ENCODE measurements at regions of chr2 and their contacts with region 1.

Region 1: GRCh38 chr2:30208452-30208851 is 22.9 kb upstream of the LBH start:
- DNase-seq: peak; percentile 56
- H3K4me3 Mint-ChIP-seq: no peak overlapping the region
- H3K27ac Mint-ChIP-seq: no peak overlapping the region
- H3K4me1 Mint-ChIP-seq: peaks cover 13% of the 10 kb centered on the region
- H3K27me3 Mint-ChIP-seq: no peaks in the 10 kb centered on the region

Region 2: DNA sequence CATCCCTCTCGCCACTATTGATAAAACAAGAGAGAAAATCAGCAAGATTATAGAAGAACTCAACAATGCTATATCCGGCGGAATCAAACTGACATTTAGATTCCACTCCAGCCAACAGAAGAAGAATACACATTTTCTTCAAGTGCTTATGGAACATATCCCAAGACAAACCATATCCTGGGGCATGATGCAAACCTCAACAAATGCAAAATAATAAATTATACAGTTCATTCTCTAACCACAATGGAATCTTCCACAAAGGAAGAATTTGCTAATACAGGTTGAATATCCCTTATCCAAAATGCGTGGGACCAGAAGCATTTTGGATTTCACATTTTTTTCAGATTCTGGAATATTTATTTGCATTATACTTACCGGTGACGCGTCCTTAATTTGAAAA is 113.0 kb before region 1 on chr2:
- CTCF ChIA-PET with region 1: no interaction called
- POLR2A ChIA-PET with region 1: no interaction called
- intact Hi-C with region 1: no loop called
- DNase-seq: no peak
- H3K4me3 Mint-ChIP-seq: no peak overlapping the region
- H3K27ac Mint-ChIP-seq: no peak overlapping the region
- H3K4me1 Mint-ChIP-seq: peaks cover 1% of the 10 kb centered on the region
- H3K27me3 Mint-ChIP-seq: peaks cover 23% of the 10 kb centered on the region

Region 3: GRCh38 chr2:30225131-30225762 is 16.8 kb after region 1 on chr2:
- CTCF ChIA-PET with region 1: interaction called, 31 read pairs
- POLR2A ChIA-PET with region 1: interaction called, 4 read pairs
- intact Hi-C with region 1: no loop called
- DNase-seq: peak; percentile 62
- H3K4me3 Mint-ChIP-seq: peak overlapping the region; percentile 83
- H3K27ac Mint-ChIP-seq: peak overlapping the region; percentile 97
- H3K4me1 Mint-ChIP-seq: peaks cover 70% of the 10 kb centered on the region
- H3K27me3 Mint-ChIP-seq: no peaks in the 10 kb centered on the region

Region 4: GRCh38 chr2:30239308-30239985 is 31.0 kb after region 1 on chr2:
- CTCF ChIA-PET with region 1: interaction called, 41 read pairs
- POLR2A ChIA-PET with region 1: no interaction called
- intact Hi-C with region 1: loop called (anchors 2 kb)
- DNase-seq: peak; percentile 87
- H3K4me3 Mint-ChIP-seq: peak overlapping the region; percentile 54
- H3K27ac Mint-ChIP-seq: peak overlapping the region; percentile 86
- H3K4me1 Mint-ChIP-seq: peaks cover 93% of the 10 kb centered on the region
- H3K27me3 Mint-ChIP-seq: no peaks in the 10 kb centered on the region

Region 5: DNA sequence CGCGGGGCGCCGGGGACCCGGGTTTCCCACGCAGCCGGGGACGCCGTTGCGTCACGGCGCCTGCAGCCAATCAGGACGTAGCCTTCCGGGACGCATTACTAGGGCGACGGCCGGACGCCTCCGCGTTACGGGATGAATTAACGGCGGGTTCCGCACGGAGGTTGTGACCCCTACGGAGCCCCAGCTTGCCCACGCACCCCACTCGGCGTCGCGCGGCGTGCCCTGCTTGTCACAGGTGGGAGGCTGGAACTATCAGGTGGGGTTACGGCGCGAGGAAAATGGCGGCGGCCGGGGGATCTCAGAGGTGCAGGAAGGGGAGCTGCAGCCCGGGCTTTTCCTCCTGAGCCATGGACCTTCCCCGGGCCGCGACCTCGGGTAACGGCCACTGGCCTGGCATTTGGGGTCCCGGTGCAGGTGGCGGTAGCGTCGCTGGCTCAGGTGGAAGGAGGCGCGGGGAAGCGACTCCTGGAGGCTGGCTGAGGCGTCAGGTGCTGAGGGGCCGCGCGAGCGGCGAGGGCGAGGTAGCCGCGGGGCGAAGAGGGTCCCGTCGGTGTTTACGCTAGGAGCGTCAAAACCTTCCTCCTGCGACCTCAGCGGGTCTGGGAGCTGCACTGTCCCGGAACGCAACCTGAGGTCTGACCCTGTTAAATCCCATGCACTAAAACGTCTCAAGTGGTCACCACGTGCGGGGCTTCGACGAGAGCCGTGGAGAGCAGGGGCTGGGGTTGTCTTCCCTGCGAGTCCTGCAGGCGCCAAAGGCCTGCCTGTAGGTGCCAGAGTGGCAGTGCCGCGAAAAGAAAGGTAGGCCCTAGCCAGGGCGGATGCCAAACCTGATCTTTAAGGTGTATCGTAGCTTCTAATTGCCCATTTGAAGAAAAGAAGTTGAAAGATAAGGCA is 238.9 kb after region 1 on chr2 and contains the start of gene LCLAT1:
- CTCF ChIA-PET with region 1: interaction called, 12 read pairs
- POLR2A ChIA-PET with region 1: no interaction called
- intact Hi-C with region 1: no loop called
- DNase-seq: peak; percentile 90
- H3K4me3 Mint-ChIP-seq: peak within 1 kb of the TSS; percentile 88
- H3K27ac Mint-ChIP-seq: peak within 1 kb of the TSS; percentile 95
- H3K4me1 Mint-ChIP-seq: peaks cover 24% of the 10 kb centered on the region
- H3K27me3 Mint-ChIP-seq: no peaks in the 10 kb centered on the region
- total RNA-seq, gene LCLAT1: 21.5 to 24.3 TPM

Region 6: GRCh38 chr2:30691948-30692828 is 483.7 kb after region 1 on chr2:
- CTCF ChIA-PET with region 1: interaction called, 10 read pairs
- POLR2A ChIA-PET with region 1: no interaction called
- intact Hi-C with region 1: no loop called
- DNase-seq: no peak
- H3K4me3 Mint-ChIP-seq: no peak overlapping the region
- H3K27ac Mint-ChIP-seq: no peak overlapping the region
- H3K4me1 Mint-ChIP-seq: no peaks in the 10 kb centered on the region
- H3K27me3 Mint-ChIP-seq: no peaks in the 10 kb centered on the region

Measured in activated CD4-positive, alpha-beta memory T cell treated with anti-CD3 and anti-CD28 coated beads for 36 hours (primary cell).